SK-N-SH (cell line): ENCODE measurements at regions of chr15 and their contacts with region 1.

Region 1: DNA sequence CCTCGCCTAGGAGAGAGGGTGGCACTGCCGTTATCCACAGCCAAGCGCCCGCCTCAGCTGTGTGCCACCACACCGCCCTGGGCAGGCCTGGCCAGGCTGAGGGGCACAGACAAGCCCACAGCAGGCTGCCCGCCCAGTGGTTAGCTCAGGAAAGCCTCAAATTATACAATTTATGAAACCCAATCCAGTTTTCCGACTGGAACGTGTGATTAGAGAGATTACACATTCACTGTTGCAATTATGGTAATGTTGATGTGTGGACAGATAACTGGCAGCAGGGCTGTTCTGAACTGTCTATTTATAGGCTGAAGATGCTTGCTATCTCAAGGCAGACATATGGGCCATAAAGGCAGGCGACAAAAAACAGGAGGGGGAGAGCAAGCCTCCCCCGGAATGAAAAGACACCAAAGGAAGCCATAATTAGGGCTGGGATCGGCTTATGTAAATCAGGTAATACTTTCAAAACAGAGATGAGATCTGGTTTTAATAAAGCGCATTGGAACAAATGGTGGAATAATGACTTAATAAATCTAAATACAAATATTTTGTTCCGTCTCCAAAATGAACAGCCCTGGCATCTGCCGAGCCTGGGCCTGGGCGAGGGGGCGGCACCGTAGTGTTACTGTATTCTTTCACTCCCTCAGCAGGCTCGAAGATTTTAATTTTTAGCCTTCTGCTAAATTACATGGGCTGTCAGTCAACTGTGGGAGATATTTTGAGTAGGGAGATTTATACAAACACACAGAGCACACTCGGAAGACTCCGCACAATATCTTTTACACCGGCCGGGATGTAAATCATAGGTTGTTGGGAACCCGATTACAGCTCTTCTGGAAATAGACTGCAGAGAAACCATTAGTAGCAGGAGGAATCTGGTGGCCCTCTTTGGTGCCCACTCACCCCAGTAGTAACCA is 103.1 kb upstream of the TLE3 start:
- DNase-seq: peak; percentile 80
- H3K4me3 ChIP-seq: no peak overlapping the region
- H3K27ac ChIP-seq: peak overlapping the region in 1 of 2 experiments; percentile 95; a peak in 2 of 4 replicates
- H3K4me1 ChIP-seq: peaks cover 29 to 95% of the 10 kb centered on the region in 2 experiments
- H3K27me3 ChIP-seq: no peaks in the 10 kb centered on the region
- CTCF ChIP-seq: no peak
- EP300 ChIP-seq: peak in 1 of 2 experiments; percentile 95; a peak in 2 of 4 replicates
- RAD21 ChIP-seq: peak; percentile 24; the same call in 1 of the 2 replicates

Region 2: GRCh38 chr15:70147178-70147760 is 53.5 kb before region 1 on chr15:
- CTCF ChIA-PET with region 1: no interaction called
- POLR2A ChIA-PET with region 1: no interaction called
- DNase-seq: no peak
- H3K4me3 ChIP-seq: no peak overlapping the region
- H3K27ac ChIP-seq: no peak overlapping the region
- H3K4me1 ChIP-seq: peaks cover 6 to 28% of the 10 kb centered on the region in 2 experiments; a peak in 3 of 4 replicates
- H3K27me3 ChIP-seq: no peaks in the 10 kb centered on the region
- CTCF ChIP-seq: no peak
- EP300 ChIP-seq: no peak
- RAD21 ChIP-seq: no peak

Region 3: DNA sequence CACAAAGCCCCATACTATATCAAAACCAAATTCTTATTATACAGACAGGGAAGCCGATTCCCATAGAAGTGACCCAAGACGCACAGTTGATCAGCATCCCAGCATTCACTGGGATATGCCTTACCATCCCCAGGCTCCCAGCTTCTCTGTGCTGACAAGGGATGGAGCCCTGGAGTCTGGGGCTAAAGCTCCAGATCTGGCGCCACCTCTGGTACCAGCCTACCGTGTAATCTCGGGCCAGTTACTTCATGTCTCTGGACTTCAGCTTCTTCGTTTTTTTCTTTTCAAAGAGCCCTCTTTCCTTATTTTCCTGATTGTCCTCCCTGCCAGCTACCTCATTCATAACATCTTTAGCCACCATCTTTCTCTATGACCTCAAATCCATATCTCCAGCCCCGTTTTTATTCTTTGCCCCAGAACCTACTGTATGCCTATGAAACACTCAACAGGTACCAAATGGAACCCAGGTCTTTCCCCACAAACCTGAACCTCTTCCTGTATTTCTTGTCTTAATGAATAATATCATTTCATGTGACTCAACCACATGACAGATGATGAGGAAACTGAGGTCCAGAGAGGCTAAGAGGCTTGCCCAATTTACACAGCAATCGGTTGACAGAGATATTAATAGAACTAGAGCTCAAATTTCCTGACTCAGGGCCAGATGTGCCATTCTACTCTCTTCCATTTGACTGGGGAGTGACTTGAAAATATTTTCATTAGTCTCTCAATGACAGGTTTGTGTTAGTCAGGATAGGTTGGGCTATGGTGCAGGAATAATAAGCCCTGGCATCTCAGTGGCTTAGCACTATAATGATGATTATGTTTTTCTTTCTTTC is 17.7 kb before region 1 on chr15:
- CTCF ChIA-PET with region 1: interaction called, 16 read pairs
- POLR2A ChIA-PET with region 1: interaction called, 3 read pairs
- DNase-seq: no peak
- H3K4me3 ChIP-seq: no peak overlapping the region
- H3K27ac ChIP-seq: no peak overlapping the region
- H3K4me1 ChIP-seq: peaks cover 0 to 54% of the 10 kb centered on the region in 2 experiments; a peak in 1 of 4 replicates
- H3K27me3 ChIP-seq: no peaks in the 10 kb centered on the region
- CTCF ChIP-seq: no peak
- EP300 ChIP-seq: no peak
- RAD21 ChIP-seq: no peak

Region 4: GRCh38 chr15:70355275-70355795 is 154.6 kb after region 1 on chr15:
- CTCF ChIA-PET with region 1: no interaction called
- POLR2A ChIA-PET with region 1: no interaction called
- DNase-seq: peak; percentile 4
- H3K4me3 ChIP-seq: no peak overlapping the region
- H3K27ac ChIP-seq: no peak overlapping the region
- H3K4me1 ChIP-seq: peaks cover 0 to 26% of the 10 kb centered on the region in 2 experiments; a peak in 2 of 4 replicates
- H3K27me3 ChIP-seq: peaks cover 4% of the 10 kb centered on the region; the same call in 1 of the 2 replicates
- CTCF ChIP-seq: peak; percentile 30; the same call in 1 of the 2 replicates
- EP300 ChIP-seq: no peak
- RAD21 ChIP-seq: no peak

Region 5: GRCh38 chr15:70535071-70535954 is 334.5 kb after region 1 on chr15:
- CTCF ChIA-PET with region 1: no interaction called
- POLR2A ChIA-PET with region 1: no interaction called
- DNase-seq: no peak
- H3K4me3 ChIP-seq: no peak overlapping the region
- H3K27ac ChIP-seq: no peak overlapping the region
- H3K4me1 ChIP-seq: peaks cover 0 to 15% of the 10 kb centered on the region in 2 experiments; a peak in 2 of 4 replicates
- H3K27me3 ChIP-seq: no peaks in the 10 kb centered on the region; the same call in none of the 2 replicates
- CTCF ChIP-seq: no peak
- EP300 ChIP-seq: no peak
- RAD21 ChIP-seq: no peak